Breast epithelium (tissue), 4 donors: ENCODE measurements at regions of chr17 and their contacts with region 1.

Region 1: GRCh38 chr17:45135192-45135977 is at the start of gene ACBD4:
- DNase-seq: peak; percentile 96 to 97
- H3K4me3 ChIP-seq: peak within 1 kb of the TSS; percentile 74
- H3K27ac ChIP-seq: peak within 1 kb of the TSS; percentile 82 to 92
- H3K4me1 ChIP-seq: peaks cover 6 to 8% of the 10 kb centered on the region in 2 donors
- H3K27me3 ChIP-seq: no peaks in the 10 kb centered on the region
- CTCF ChIP-seq: peak; percentile 100
- POLR2A ChIP-seq: peak; percentile 53
- total RNA-seq, gene ACBD4: 13.8 to 28.8 (median 15.7) TPM

Region 2: DNA sequence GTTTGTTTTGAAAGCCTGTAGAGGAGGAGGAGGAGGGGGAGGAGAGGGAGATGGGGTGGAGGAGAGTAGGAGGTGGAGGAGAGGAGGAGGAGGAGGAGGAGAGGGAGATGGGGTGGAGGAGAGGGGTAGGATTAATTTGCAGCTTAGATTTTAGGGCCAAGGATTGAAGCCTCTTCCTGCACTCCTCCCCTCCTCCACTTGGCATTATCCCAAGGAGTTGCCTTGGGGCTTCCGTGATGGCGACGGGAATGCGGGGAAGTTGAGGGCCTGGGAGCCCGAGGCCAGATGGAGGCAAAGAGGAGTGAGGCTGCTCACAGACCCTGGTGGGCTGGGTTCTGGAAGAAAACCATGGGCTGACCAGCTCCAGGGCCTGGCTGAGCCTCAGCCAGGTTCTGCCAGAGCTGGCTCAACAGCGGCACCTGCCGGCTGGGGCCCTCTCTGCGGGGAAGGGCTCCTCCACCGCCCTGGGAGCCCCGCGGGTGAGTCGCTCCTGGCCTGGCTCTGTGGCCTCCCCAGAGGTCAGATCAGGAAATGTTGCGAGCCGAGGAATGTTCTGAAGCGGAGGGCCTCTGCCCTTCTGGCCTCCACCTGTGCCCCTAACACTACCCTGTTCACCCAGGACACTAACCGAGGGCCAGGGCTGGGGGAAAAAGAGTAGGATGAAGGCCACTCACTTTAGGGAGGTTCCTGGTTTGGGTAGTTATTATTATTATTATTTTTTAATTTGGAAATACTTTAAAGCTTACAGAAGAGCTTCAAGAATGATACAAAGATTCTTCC is 62.4 kb after region 1 on chr17:
- intact Hi-C with region 1: loop called (anchors 5 kb)
- DNase-seq: peak; percentile 78 to 91
- H3K4me3 ChIP-seq: peak overlapping the region in 1 of 3 donors; percentile 37
- H3K27ac ChIP-seq: peak overlapping the region; percentile 77 to 86
- H3K4me1 ChIP-seq: no peaks in the 10 kb centered on the region
- H3K27me3 ChIP-seq: no peaks in the 10 kb centered on the region
- CTCF ChIP-seq: peak; percentile 95 to 99 (median 99)
- POLR2A ChIP-seq: no peak

Region 3: GRCh38 chr17:46742565-46743270 is 1607.3 kb after region 1 on chr17:
- intact Hi-C with region 1: loop called (anchors 10 kb)
- DNase-seq: peak in 1 of 2 donors; percentile 41
- H3K4me3 ChIP-seq: no peak overlapping the region
- H3K27ac ChIP-seq: peak overlapping the region in 1 of 2 donors; percentile 22
- H3K4me1 ChIP-seq: no peaks in the 10 kb centered on the region
- H3K27me3 ChIP-seq: no peaks in the 10 kb centered on the region
- CTCF ChIP-seq: no peak
- POLR2A ChIP-seq: no peak